MCF 10A (cell line): ENCODE measurements at regions of chr12 and their contacts with region 1.

Region 1: GRCh38 chr12:43882578-43883178 is 46.8 kb downstream of the TMEM117 start:
- DNase-seq: peak; percentile 65
- H3K4me3 Mint-ChIP-seq: no peak overlapping the region
- H3K27ac Mint-ChIP-seq: no peak overlapping the region
- H3K4me1 Mint-ChIP-seq: no peaks in the 10 kb centered on the region
- H3K27me3 Mint-ChIP-seq: no peaks in the 10 kb centered on the region
- CTCF ChIP-seq: peak; percentile 71

Region 2: DNA sequence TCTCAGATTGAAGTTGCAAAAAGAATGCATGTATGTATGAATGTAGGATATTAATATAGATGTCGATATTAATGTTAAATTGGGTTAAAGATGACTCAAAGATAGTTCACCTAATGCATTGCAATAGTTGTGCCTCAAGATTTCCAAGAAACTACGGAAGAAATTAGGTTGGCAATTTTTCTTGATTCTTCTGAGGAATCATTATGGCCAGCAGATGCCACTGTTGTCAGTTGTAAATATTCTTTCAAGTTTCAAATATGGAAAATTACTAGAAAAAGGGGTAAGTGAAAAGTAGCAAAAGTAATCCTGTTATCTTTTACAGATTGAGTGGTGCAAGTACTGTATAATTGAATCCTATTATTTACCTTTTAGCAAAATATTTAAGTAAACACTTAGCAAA is 532.8 kb before region 1 on chr12:
- CTCF ChIA-PET with region 1: interaction called, 3 read pairs
- POLR2A ChIA-PET with region 1: no interaction called
- intact Hi-C with region 1: loop called (anchors 1 kb)
- DNase-seq: peak; percentile 29
- H3K4me3 Mint-ChIP-seq: no peak overlapping the region
- H3K27ac Mint-ChIP-seq: no peak overlapping the region
- H3K4me1 Mint-ChIP-seq: no peaks in the 10 kb centered on the region
- H3K27me3 Mint-ChIP-seq: peaks cover 46% of the 10 kb centered on the region
- CTCF ChIP-seq: peak; percentile 50

Region 3: DNA sequence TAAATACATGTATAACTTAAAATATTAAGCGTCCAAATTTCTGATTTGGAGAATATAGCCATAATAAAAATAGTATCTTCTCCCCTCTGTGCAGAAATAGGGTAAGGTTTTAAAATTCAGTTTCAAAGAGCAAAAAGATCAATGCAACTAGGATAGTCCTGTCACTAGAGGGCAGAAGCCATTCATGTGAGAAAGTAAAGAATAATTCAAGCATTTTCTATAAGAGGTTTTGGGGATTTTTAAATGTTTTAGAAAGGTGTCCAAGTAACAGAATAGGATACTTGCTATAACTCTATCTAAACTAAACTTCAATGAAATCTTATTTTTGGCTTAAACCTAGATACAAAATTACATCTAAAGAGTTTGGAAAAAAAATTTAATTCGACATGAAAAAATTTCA is 381.0 kb before region 1 on chr12:
- CTCF ChIA-PET with region 1: no interaction called
- POLR2A ChIA-PET with region 1: no interaction called
- intact Hi-C with region 1: loop called (anchors 1 kb)
- DNase-seq: peak; percentile 45
- H3K4me3 Mint-ChIP-seq: no peak overlapping the region
- H3K27ac Mint-ChIP-seq: no peak overlapping the region
- H3K4me1 Mint-ChIP-seq: no peaks in the 10 kb centered on the region
- H3K27me3 Mint-ChIP-seq: peaks cover 59% of the 10 kb centered on the region
- CTCF ChIP-seq: peak; percentile 53

Region 4: DNA sequence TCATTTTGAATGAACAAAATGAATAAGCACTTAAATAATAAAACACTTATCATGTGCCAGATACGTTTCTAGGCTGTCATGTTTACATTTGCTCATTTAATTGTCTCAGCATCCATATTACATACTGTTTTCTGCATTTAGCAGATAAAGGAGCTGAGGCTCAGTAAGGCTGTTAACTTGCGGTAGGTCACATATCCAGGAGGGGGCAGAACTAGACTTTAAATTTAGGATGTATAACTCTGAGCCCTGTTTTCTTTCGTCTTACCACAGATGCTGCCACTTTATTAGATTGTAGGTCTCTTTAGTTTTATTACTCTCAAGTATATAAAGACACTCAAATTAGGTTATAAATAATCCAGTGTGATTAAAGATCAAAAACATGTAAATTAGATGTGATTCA is 106.2 kb before region 1 on chr12:
- CTCF ChIA-PET with region 1: interaction called, 46 read pairs
- POLR2A ChIA-PET with region 1: interaction called, 6 read pairs
- intact Hi-C with region 1: loop called (anchors 1 kb)
- DNase-seq: peak; percentile 28
- H3K4me3 Mint-ChIP-seq: no peak overlapping the region
- H3K27ac Mint-ChIP-seq: no peak overlapping the region
- H3K4me1 Mint-ChIP-seq: no peaks in the 10 kb centered on the region
- H3K27me3 Mint-ChIP-seq: no peaks in the 10 kb centered on the region
- CTCF ChIP-seq: peak; percentile 18

Region 5: GRCh38 chr12:43848786-43849185 is 33.9 kb before region 1 on chr12:
- CTCF ChIA-PET with region 1: interaction called, 10 read pairs
- POLR2A ChIA-PET with region 1: no interaction called
- intact Hi-C with region 1: no loop called
- DNase-seq: no peak
- H3K4me3 Mint-ChIP-seq: no peak overlapping the region
- H3K27ac Mint-ChIP-seq: no peak overlapping the region
- H3K4me1 Mint-ChIP-seq: peaks cover 26% of the 10 kb centered on the region
- H3K27me3 Mint-ChIP-seq: no peaks in the 10 kb centered on the region
- CTCF ChIP-seq: no peak

Region 6: GRCh38 chr12:43872396-43872795 is 10.3 kb before region 1 on chr12:
- CTCF ChIA-PET with region 1: interaction called, 13 read pairs
- POLR2A ChIA-PET with region 1: interaction called, 6 read pairs
- intact Hi-C with region 1: no loop called
- DNase-seq: no peak
- H3K4me3 Mint-ChIP-seq: no peak overlapping the region
- H3K27ac Mint-ChIP-seq: no peak overlapping the region
- H3K4me1 Mint-ChIP-seq: peaks cover 4% of the 10 kb centered on the region
- H3K27me3 Mint-ChIP-seq: no peaks in the 10 kb centered on the region
- CTCF ChIP-seq: no peak

Region 7: DNA sequence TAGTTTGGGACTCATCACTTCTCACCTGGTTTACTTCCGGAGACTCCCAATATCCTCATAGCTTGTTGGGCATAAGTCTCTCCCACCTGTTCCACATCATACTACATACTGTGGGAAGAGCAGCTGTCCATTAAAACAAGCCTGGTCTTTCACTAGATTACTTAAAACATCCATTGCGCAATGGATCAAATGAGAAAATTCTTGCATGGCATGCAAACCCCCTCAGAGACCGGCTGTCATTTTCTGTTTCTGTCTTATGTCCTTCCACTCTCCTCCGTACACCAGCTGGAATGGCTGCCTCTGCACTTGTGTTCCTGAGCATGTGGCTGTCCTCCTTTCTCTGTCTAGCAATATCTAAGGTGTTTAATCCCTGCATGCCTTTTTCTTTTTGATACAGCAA is 218.8 kb after region 1 on chr12:
- CTCF ChIA-PET with region 1: no interaction called
- POLR2A ChIA-PET with region 1: no interaction called
- intact Hi-C with region 1: no loop called
- DNase-seq: no peak
- H3K4me3 Mint-ChIP-seq: no peak overlapping the region
- H3K27ac Mint-ChIP-seq: no peak overlapping the region
- H3K4me1 Mint-ChIP-seq: no peaks in the 10 kb centered on the region
- H3K27me3 Mint-ChIP-seq: no peaks in the 10 kb centered on the region
- CTCF ChIP-seq: no peak